Endothelial cell of umbilical vein (primary cell): ENCODE measurements at regions of chr5 and their contacts with region 1.

Region 1: GRCh38 chr5:33641744-33642505 is 201.2 kb downstream of the TARS1 start:
- DNase-seq: no peak
- H3K4me3 ChIP-seq: no peak overlapping the region
- H3K27ac ChIP-seq: no peak overlapping the region
- H3K4me1 ChIP-seq: no peaks in the 10 kb centered on the region
- H3K27me3 ChIP-seq: no peaks in the 10 kb centered on the region
- CTCF ChIP-seq: no peak
- POLR2A ChIP-seq: no peak

Region 2: DNA sequence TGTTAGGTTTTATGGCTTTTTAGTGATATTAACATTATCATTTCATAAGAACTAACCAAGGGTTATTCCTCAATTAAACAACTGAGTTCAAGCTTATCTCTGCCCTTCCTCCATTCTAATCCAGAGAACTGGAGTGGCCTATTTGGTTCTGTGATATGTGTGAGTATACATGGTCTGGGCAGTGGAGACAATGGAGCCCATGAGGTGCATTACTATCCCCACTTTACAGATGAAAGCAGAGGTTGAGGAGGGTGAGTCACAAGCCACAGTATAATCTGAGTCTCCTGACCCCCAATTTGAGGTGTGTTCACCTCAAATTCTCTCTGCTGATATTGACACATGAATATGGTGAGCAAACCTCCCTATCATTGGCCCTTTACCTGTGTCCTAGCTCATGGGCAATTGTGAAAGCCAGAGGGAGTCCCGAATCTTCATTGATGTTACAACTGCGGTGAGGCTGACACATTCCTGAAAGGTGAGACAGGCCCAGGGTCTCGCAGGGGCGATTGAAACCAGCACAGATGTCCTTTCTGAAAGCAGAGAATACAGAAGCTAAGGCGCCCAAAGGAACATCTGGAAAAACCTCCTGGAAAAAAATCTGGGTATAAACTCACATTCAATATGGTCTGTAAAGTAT is 16.0 kb after region 1 on chr5:
- CTCF ChIA-PET with region 1: no interaction called
- POLR2A ChIA-PET with region 1: no interaction called
- dilution Hi-C with region 1: no loop called
- intact Hi-C with region 1: loop called (anchors 1 kb)
- DNase-seq: no peak
- H3K4me3 ChIP-seq: no peak overlapping the region
- H3K27ac ChIP-seq: no peak overlapping the region
- H3K4me1 ChIP-seq: no peaks in the 10 kb centered on the region
- H3K27me3 ChIP-seq: no peaks in the 10 kb centered on the region
- CTCF ChIP-seq: no peak
- POLR2A ChIP-seq: no peak